ENCODE measurements at regions of chr2 and their contacts with region 1.

Region 1: GRCh38 chr2:197191177-197191939 is 119.2 kb downstream of the ANKRD44 start:
- DNase-seq: no peak
- ATAC-seq: no peak
- H3K4me3 ChIP-seq: no peak overlapping the region
- H3K27ac ChIP-seq: peak overlapping the region in 1 of 12 donors; percentile 18
- H3K4me1 ChIP-seq: peaks cover 0 to 24% (median 11%) of the 10 kb centered on the region in 12 donors
- H3K27me3 ChIP-seq: no peaks in the 10 kb centered on the region
- CTCF ChIP-seq: peak; percentile 55 to 80 (median 72)
- POLR2A ChIP-seq: no peak

Region 2: DNA sequence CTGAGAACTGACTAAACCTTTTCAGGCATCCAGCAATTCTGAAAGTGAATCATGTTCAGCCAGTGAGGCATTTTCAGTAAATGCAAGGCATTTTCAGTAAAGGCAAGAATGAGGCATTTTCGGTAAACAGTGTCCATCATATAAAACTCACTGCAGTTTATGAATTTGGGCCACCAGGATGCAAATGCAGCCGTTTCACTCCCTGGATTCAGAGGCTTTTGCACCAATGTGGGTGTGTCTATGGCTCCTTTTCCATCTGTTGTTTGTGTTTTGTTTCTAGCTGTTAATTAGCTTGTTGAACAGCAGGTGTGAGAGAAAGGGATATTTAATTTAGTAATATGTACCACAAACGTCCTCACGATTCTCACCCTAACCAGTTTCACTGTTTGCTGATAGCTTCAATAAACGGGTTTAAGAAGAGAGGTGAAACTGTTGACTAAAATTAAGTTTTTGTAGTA is 148.6 kb before region 1 on chr2:
- intact Hi-C with region 1: no loop called
- DNase-seq: no peak
- ATAC-seq: no peak
- H3K4me3 ChIP-seq: no peak overlapping the region
- H3K27ac ChIP-seq: no peak overlapping the region
- H3K4me1 ChIP-seq: peaks cover 0 to 9% (median 0%) of the 10 kb centered on the region in 12 donors
- H3K27me3 ChIP-seq: no peaks in the 10 kb centered on the region
- CTCF ChIP-seq: no peak
- POLR2A ChIP-seq: no peak

Region 3: GRCh38 chr2:197145471-197146138 is 45.8 kb before region 1 on chr2:
- intact Hi-C with region 1: no loop called
- DNase-seq: no peak
- ATAC-seq: peak in 2 of 4 donors; percentile 47 to 79
- H3K4me3 ChIP-seq: no peak overlapping the region
- H3K27ac ChIP-seq: peak overlapping the region in 1 of 12 donors; percentile 63
- H3K4me1 ChIP-seq: peaks cover 0 to 55% (median 0%) of the 10 kb centered on the region in 12 donors
- H3K27me3 ChIP-seq: no peaks in the 10 kb centered on the region
- CTCF ChIP-seq: no peak
- POLR2A ChIP-seq: no peak

Region 4: GRCh38 chr2:197310271-197310985 is 119.1 kb after region 1 on chr2 and contains the start of gene ANKRD44:
- intact Hi-C with region 1: loop called (anchors 1 to 5 kb)
- DNase-seq: peak; percentile 92 to 96 (median 94)
- ATAC-seq: peak; percentile 90 to 99 (median 98)
- H3K4me3 ChIP-seq: peak within 1 kb of the TSS; percentile 56 to 97 (median 72)
- H3K27ac ChIP-seq: peak within 1 kb of the TSS; percentile 43 to 91 (median 70)
- H3K4me1 ChIP-seq: peaks cover 0 to 41% (median 19%) of the 10 kb centered on the region in 12 donors
- H3K27me3 ChIP-seq: no peaks in the 10 kb centered on the region
- CTCF ChIP-seq: peak in 10 of 12 donors; percentile 26 to 59 (median 42)
- POLR2A ChIP-seq: peak in 1 of 2 donors; percentile 58
- total RNA-seq, gene ANKRD44: 4.9 to 30.6 (median 8.6) TPM

Measured in heart left ventricle (tissue), 16 donors.